ENCODE measurements at regions of chr15 and their contacts with region 1.

Region 1: GRCh38 chr15:68875377-68876116 is 54.8 kb upstream of the SPESP1 start:
- DNase-seq: peak; percentile 96
- ATAC-seq: peak; percentile 82
- H3K4me3 Mint-ChIP-seq: peak overlapping the region; percentile 39
- H3K27ac Mint-ChIP-seq: no peak overlapping the region
- H3K4me1 Mint-ChIP-seq: peaks cover 2% of the 10 kb centered on the region
- H3K27me3 Mint-ChIP-seq: peaks cover 17% of the 10 kb centered on the region
- CTCF ChIP-seq: peak; percentile 79

Region 2: GRCh38 chr15:68559345-68560310 is 315.9 kb before region 1 on chr15:
- CTCF ChIA-PET with region 1: interaction called, 19 read pairs
- POLR2A ChIA-PET with region 1: no interaction called
- intact Hi-C with region 1: loop called (anchors 5 kb)
- DNase-seq: peak; percentile 72
- ATAC-seq: peak; percentile 93
- H3K4me3 Mint-ChIP-seq: peak overlapping the region; percentile 51
- H3K27ac Mint-ChIP-seq: no peak overlapping the region
- H3K4me1 Mint-ChIP-seq: peaks cover 14% of the 10 kb centered on the region
- H3K27me3 Mint-ChIP-seq: peaks cover 36% of the 10 kb centered on the region
- CTCF ChIP-seq: peak; percentile 97

Region 3: DNA sequence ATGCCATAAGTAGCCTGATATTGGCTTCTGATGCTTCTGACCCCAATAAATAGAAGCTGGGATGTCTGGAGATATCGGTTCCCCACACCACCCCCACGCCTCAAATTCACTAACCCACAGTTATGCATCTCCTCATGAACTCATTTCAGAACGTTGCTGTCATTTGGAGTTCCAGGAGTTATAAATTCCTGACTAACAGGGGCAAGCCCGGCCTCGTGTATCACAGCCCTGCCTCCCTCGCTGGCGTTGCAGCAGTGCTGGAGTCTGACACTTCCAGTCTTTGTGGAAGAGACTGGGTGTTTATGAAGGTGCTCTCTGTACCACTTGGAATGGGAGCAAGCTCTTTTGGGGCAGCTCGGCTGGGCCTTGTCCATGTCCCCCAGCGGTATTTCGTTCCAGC is 155.9 kb before region 1 on chr15:
- CTCF ChIA-PET with region 1: interaction called, 10 read pairs
- POLR2A ChIA-PET with region 1: no interaction called
- intact Hi-C with region 1: no loop called
- DNase-seq: no peak
- ATAC-seq: no peak
- H3K4me3 Mint-ChIP-seq: no peak overlapping the region
- H3K27ac Mint-ChIP-seq: no peak overlapping the region
- H3K4me1 Mint-ChIP-seq: no peaks in the 10 kb centered on the region
- H3K27me3 Mint-ChIP-seq: peaks cover 9% of the 10 kb centered on the region
- CTCF ChIP-seq: no peak

Region 4: GRCh38 chr15:68755731-68756130 is 119.8 kb before region 1 on chr15:
- CTCF ChIA-PET with region 1: interaction called, 11 read pairs
- POLR2A ChIA-PET with region 1: no interaction called
- intact Hi-C with region 1: no loop called
- DNase-seq: no peak
- ATAC-seq: no peak
- H3K4me3 Mint-ChIP-seq: no peak overlapping the region
- H3K27ac Mint-ChIP-seq: no peak overlapping the region
- H3K4me1 Mint-ChIP-seq: peaks cover 7% of the 10 kb centered on the region
- H3K27me3 Mint-ChIP-seq: peaks cover 12% of the 10 kb centered on the region
- CTCF ChIP-seq: no peak

Region 5: DNA sequence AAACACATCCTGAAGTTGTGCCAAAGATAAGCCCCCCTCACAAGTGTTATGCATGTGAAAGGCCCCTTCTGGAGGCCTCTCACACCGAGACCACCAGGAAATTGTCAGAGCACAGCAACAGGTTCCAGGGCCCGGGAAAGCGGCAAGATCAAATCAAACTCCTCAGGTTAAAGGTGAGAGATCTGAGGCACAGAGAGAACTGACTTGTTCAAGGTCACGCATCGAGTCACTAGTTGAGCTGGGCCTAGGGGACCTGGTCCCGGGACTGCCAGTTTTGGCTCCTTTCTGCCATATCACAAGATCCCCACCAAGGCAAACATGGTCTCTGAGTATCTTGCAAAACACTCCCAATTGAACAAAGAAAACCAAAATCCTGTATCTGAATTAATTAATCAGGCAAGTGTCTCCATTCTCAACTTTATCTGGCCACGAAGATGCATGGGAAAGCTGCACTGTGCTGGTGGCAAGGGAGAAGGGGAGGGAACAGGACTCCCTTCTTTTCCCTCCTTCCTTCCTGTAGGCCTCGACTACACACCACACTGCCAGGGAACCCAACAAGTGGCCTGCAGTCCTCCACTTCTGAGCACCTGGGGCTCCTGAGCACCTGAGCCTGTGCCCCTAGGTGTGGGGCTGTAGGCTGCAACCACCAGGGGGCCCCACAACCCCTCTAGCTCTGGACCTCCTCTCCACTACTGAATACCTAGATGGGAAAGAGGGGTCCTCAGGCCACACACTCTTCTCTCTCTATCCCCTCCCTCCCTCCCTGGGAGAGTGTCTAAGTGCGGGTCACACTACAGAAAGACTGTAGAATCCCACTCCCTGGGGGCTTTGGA is 92.1 kb before region 1 on chr15:
- CTCF ChIA-PET with region 1: interaction called, 55 read pairs
- POLR2A ChIA-PET with region 1: no interaction called
- intact Hi-C with region 1: no loop called
- DNase-seq: peak; percentile 79
- ATAC-seq: peak; percentile 85
- H3K4me3 Mint-ChIP-seq: no peak overlapping the region
- H3K27ac Mint-ChIP-seq: peak overlapping the region; percentile 72
- H3K4me1 Mint-ChIP-seq: peaks cover 43% of the 10 kb centered on the region
- H3K27me3 Mint-ChIP-seq: no peaks in the 10 kb centered on the region
- CTCF ChIP-seq: peak; percentile 79

Region 6: GRCh38 chr15:68829068-68829467 is 46.5 kb before region 1 on chr15:
- CTCF ChIA-PET with region 1: interaction called, 13 read pairs
- POLR2A ChIA-PET with region 1: no interaction called
- intact Hi-C with region 1: no loop called
- DNase-seq: peak; percentile 48
- ATAC-seq: peak; percentile 96
- H3K4me3 Mint-ChIP-seq: no peak overlapping the region
- H3K27ac Mint-ChIP-seq: no peak overlapping the region
- H3K4me1 Mint-ChIP-seq: peaks cover 23% of the 10 kb centered on the region
- H3K27me3 Mint-ChIP-seq: no peaks in the 10 kb centered on the region
- CTCF ChIP-seq: peak; percentile 59

Region 7: GRCh38 chr15:68924866-68925560 is 49.5 kb after region 1 on chr15:
- CTCF ChIA-PET with region 1: interaction called, 19 read pairs
- POLR2A ChIA-PET with region 1: no interaction called
- intact Hi-C with region 1: no loop called
- DNase-seq: peak; percentile 83
- ATAC-seq: no peak
- H3K4me3 Mint-ChIP-seq: no peak overlapping the region
- H3K27ac Mint-ChIP-seq: no peak overlapping the region
- H3K4me1 Mint-ChIP-seq: no peaks in the 10 kb centered on the region
- H3K27me3 Mint-ChIP-seq: peaks cover 19% of the 10 kb centered on the region
- CTCF ChIP-seq: peak; percentile 76